Mammary epithelial cell (primary cell): ENCODE measurements at regions of chr7 and their contacts with region 1.

Region 1: GRCh38 chr7:112206238-112207044 is at the starts of genes DOCK4 and ZNF277:
- DNase-seq: peak; percentile 100
- H3K4me3 ChIP-seq: peak within 1 kb of the TSS; percentile 71 to 97 (median 94)
- H3K27ac ChIP-seq: peak within 1 kb of the TSS; percentile 77
- H3K4me1 ChIP-seq: peaks cover 16% of the 10 kb centered on the region
- H3K27me3 ChIP-seq: no peaks in the 10 kb centered on the region
- CTCF ChIP-seq: peak in 1 of 2 donors; percentile 1
- total RNA-seq, gene DOCK4: 7.5 to 22.2 TPM
- total RNA-seq, gene ZNF277: 18.9 to 36.0 TPM

Region 2: DNA sequence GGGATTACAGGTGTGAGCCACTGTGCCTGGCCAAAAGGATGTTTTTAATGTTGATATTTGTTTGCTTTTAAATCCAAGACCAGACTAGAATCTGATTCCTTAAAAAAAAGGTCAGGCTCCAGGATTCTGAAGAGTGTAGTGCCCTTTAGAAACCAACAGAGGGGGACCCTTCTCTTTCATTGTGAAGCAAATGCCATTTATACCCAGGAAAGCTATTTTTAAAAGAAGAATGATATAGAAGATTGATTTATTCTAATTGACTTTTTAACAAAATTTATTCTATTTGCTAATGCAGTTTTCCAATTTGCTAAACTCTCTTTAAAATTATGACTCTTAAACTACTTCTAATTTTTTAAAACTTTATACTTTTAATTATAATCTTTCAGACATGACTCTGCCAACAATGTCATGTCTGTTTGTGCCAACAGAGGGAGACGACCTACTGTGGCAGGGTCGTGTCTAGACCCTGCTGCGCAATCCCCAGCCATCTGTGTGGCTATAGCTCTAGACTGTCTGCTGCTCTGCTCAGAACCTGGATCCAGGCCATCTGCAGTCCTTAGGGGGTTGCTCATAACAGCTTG is 443.1 kb before region 1 on chr7:
- CTCF ChIA-PET with region 1: interaction called, 4 read pairs
- dilution Hi-C with region 1: no loop called
- in situ Hi-C with region 1: no loop called
- intact Hi-C with region 1: loop called (anchors 5 kb)
- DNase-seq: peak; percentile 29
- H3K4me3 ChIP-seq: no peak overlapping the region
- H3K27ac ChIP-seq: no peak overlapping the region
- H3K4me1 ChIP-seq: no peaks in the 10 kb centered on the region
- H3K27me3 ChIP-seq: no peaks in the 10 kb centered on the region
- CTCF ChIP-seq: peak; percentile 45 to 65

Region 3: GRCh38 chr7:111953611-111954010 is 252.8 kb before region 1 on chr7:
- CTCF ChIA-PET with region 1: interaction called, 5 read pairs
- dilution Hi-C with region 1: no loop called
- in situ Hi-C with region 1: loop called in 1 of 2 experiments (anchors 25 kb)
- intact Hi-C with region 1: loop called (anchors 1 kb)
- DNase-seq: peak; percentile 92
- H3K4me3 ChIP-seq: no peak overlapping the region
- H3K27ac ChIP-seq: peak overlapping the region; percentile 73
- H3K4me1 ChIP-seq: peaks cover 13% of the 10 kb centered on the region
- H3K27me3 ChIP-seq: no peaks in the 10 kb centered on the region
- CTCF ChIP-seq: peak; percentile 20 to 58

Region 4: DNA sequence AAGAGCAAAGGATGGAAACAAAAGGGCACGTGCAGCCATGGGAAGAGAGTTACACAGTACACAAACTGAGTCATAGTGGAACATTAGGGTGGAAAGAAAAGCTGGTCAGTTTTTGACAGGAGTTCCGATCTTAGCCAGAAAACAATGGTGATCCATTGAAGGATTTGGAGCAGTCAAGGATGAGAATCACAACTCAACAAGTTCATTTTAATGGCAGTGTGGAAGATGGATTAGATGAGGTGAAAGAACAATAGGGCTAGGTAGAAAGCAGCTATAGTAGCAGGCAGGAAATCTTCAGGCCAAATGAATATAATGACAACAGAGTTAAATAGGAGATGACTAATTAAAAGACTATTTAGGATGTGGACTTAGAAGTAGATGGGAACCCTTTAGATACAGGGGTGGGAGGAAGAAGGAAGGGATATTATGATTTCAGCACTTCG is 136.5 kb before region 1 on chr7:
- CTCF ChIA-PET with region 1: no interaction called
- dilution Hi-C with region 1: no loop called
- in situ Hi-C with region 1: no loop called
- intact Hi-C with region 1: loop called (anchors 5 kb)
- DNase-seq: peak; percentile 36
- H3K4me3 ChIP-seq: no peak overlapping the region
- H3K27ac ChIP-seq: no peak overlapping the region
- H3K4me1 ChIP-seq: peaks cover 44% of the 10 kb centered on the region
- H3K27me3 ChIP-seq: no peaks in the 10 kb centered on the region
- CTCF ChIP-seq: no peak

Region 5: GRCh38 chr7:112223310-112223709 is 16.9 kb after region 1 on chr7:
- CTCF ChIA-PET with region 1: no interaction called
- dilution Hi-C with region 1: no loop called
- in situ Hi-C with region 1: no loop called
- intact Hi-C with region 1: no loop called
- DNase-seq: no peak
- H3K4me3 ChIP-seq: no peak overlapping the region
- H3K27ac ChIP-seq: no peak overlapping the region
- H3K4me1 ChIP-seq: peaks cover 10% of the 10 kb centered on the region
- H3K27me3 ChIP-seq: no peaks in the 10 kb centered on the region
- CTCF ChIP-seq: no peak

Region 6: GRCh38 chr7:112357136-112357535 is 150.7 kb after region 1 on chr7:
- CTCF ChIA-PET with region 1: no interaction called
- dilution Hi-C with region 1: no loop called
- in situ Hi-C with region 1: no loop called
- intact Hi-C with region 1: loop called (anchors 10 kb)
- DNase-seq: no peak
- H3K4me3 ChIP-seq: no peak overlapping the region
- H3K27ac ChIP-seq: no peak overlapping the region
- H3K4me1 ChIP-seq: peaks cover 10% of the 10 kb centered on the region
- H3K27me3 ChIP-seq: no peaks in the 10 kb centered on the region
- CTCF ChIP-seq: no peak

Region 7: GRCh38 chr7:112414855-112415490 is 208.5 kb after region 1 on chr7:
- CTCF ChIA-PET with region 1: interaction called, 4 read pairs
- dilution Hi-C with region 1: no loop called
- in situ Hi-C with region 1: loop called in 1 of 2 experiments (anchors 25 kb)
- intact Hi-C with region 1: loop called (anchors 1 kb)
- DNase-seq: peak; percentile 30
- H3K4me3 ChIP-seq: no peak overlapping the region
- H3K27ac ChIP-seq: no peak overlapping the region
- H3K4me1 ChIP-seq: peaks cover 3% of the 10 kb centered on the region
- H3K27me3 ChIP-seq: no peaks in the 10 kb centered on the region
- CTCF ChIP-seq: peak; percentile 63 to 66

Region 8: GRCh38 chr7:112449902-112450806 is 243.7 kb after region 1 on chr7 and contains the start of gene IFRD1:
- CTCF ChIA-PET with region 1: no interaction called
- dilution Hi-C with region 1: no loop called
- in situ Hi-C with region 1: no loop called
- intact Hi-C with region 1: loop called (anchors 2 kb)
- DNase-seq: peak; percentile 98
- H3K4me3 ChIP-seq: peak within 1 kb of the TSS; percentile 80 to 100 (median 96)
- H3K27ac ChIP-seq: peak within 1 kb of the TSS; percentile 81
- H3K4me1 ChIP-seq: peaks cover 31% of the 10 kb centered on the region
- H3K27me3 ChIP-seq: no peaks in the 10 kb centered on the region
- CTCF ChIP-seq: no peak
- total RNA-seq, gene IFRD1: 74.2 to 76.2 TPM